A673 (cell line): ENCODE measurements at regions of chr16 and their contacts with region 1.

Region 1: GRCh38 chr16:19086322-19087199 is 19.1 kb downstream of the COQ7 start:
- DNase-seq: peak; percentile 88
- H3K4me3 ChIP-seq: peak overlapping the region; percentile 41
- H3K27ac ChIP-seq: no peak overlapping the region
- H3K4me1 ChIP-seq: peaks cover 5% of the 10 kb centered on the region
- H3K27me3 ChIP-seq: no peaks in the 10 kb centered on the region
- CTCF ChIP-seq: peak; percentile 99

Region 2: DNA sequence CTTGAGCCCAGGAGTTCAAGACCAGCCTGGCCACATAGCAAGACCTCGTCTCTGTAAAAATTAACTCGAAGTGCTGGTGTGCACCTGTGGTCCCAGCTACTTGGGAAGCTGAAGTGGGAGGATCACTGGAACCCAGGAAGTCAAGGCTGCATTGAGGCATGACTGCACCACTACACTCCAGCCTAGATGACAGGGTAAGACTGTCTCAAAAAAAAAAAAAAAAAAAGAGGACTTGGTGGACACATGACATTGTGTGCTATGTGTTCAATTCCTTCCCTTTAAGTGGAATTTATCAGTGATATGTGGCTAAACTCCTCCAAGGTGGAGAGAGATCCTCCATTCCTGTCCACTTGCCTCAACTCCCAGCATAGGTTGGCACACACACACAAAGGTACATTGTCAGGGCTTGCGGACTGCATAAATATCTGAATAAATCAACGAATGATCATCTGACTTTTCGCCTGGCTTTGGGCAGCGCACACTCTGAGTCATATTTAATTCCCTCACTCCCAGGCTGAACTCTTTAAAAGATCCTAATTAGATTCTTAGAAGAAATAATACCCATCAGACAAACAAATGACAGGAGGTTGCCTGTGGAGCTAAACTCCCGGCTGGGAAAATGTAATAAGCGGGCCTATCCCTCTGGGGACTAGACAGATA is 56.5 kb after region 1 on chr16:
- CTCF ChIA-PET with region 1: no interaction called
- POLR2A ChIA-PET with region 1: no interaction called
- intact Hi-C with region 1: loop called (anchors 1 kb)
- DNase-seq: peak; percentile 74
- H3K4me3 ChIP-seq: no peak overlapping the region
- H3K27ac ChIP-seq: no peak overlapping the region
- H3K4me1 ChIP-seq: peaks cover 52% of the 10 kb centered on the region
- H3K27me3 ChIP-seq: no peaks in the 10 kb centered on the region
- CTCF ChIP-seq: no peak

Region 3: DNA sequence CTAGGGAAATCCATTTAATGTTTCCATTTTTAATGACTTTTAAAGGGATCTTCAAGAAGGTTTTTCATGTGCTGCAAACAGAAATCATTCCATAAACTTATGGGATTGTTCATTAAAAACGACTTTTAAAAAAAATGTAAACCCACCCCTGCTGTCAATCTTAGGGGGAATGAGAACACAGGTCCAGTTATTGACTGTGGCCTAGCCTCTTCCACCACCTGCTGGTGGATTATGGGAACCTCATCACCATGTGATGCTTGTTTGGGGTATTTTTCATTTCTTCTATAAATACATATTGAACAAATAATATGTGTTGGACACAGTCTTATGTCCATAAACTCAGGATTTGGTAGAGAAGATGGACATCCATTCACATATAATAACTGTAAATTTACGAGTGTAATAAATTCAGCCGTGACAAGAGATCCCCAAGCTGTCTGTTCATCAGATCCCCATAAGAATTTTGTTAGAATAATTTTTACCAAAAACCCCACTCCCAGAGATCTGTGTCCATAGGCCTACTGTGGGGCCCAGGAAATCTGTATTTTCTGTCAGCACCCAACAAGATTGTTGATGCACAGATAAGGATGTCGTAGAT is 289.1 kb after region 1 on chr16:
- CTCF ChIA-PET with region 1: no interaction called
- POLR2A ChIA-PET with region 1: no interaction called
- intact Hi-C with region 1: loop called (anchors 1 kb)
- DNase-seq: peak; percentile 62
- H3K4me3 ChIP-seq: no peak overlapping the region
- H3K27ac ChIP-seq: no peak overlapping the region
- H3K4me1 ChIP-seq: no peaks in the 10 kb centered on the region
- H3K27me3 ChIP-seq: no peaks in the 10 kb centered on the region
- CTCF ChIP-seq: peak; percentile 89

Region 4: GRCh38 chr16:19502395-19503131 is 416.0 kb after region 1 on chr16:
- CTCF ChIA-PET with region 1: interaction called, 8 read pairs
- POLR2A ChIA-PET with region 1: no interaction called
- intact Hi-C with region 1: loop called (anchors 1 kb)
- DNase-seq: peak; percentile 82
- H3K4me3 ChIP-seq: no peak overlapping the region
- H3K27ac ChIP-seq: no peak overlapping the region
- H3K4me1 ChIP-seq: no peaks in the 10 kb centered on the region
- H3K27me3 ChIP-seq: no peaks in the 10 kb centered on the region
- CTCF ChIP-seq: peak; percentile 87